HEK293T (cell line): ENCODE measurements at regions of chr4 and their contacts with region 1.

Region 1: GRCh38 chr4:8428293-8429097 is 12.0 kb downstream of the ACOX3 start:
- DNase-seq: peak; percentile 98

Region 2: DNA sequence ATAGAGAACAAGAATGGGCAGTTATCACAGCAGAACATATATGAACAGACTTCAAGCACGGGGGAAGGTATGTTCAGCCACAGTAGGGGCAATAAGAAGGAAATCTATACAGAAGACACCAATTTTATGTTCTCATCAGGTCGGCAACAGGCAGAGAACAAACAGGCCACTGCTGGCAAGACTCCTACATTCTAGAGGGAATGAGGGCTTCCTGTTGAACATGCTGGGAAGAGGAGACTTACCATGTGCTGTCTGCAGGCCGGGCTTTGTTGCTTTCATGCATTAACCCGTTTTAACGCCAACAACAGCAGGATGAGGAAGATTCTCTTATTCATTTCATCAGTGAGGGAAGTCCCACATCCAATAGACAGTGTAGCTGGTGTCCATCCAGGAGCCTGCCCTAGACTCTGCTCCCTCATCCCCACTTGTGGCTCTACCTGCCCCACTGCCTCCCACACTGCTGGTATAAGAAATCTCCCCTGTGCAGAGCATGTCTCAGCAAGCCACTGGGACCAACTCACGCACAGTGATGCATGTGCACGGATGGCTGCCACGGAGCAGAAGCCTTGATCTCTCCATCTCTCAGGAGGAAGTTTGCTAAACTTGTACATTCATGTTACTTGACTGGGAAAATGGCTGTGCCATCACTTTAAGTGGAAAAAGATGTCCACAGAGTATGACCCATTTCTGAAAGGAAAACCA is 72.5 kb before region 1 on chr4:
- CTCF ChIA-PET with region 1: no interaction called
- POLR2A ChIA-PET with region 1: no interaction called
- DNase-seq: no peak

Region 3: DNA sequence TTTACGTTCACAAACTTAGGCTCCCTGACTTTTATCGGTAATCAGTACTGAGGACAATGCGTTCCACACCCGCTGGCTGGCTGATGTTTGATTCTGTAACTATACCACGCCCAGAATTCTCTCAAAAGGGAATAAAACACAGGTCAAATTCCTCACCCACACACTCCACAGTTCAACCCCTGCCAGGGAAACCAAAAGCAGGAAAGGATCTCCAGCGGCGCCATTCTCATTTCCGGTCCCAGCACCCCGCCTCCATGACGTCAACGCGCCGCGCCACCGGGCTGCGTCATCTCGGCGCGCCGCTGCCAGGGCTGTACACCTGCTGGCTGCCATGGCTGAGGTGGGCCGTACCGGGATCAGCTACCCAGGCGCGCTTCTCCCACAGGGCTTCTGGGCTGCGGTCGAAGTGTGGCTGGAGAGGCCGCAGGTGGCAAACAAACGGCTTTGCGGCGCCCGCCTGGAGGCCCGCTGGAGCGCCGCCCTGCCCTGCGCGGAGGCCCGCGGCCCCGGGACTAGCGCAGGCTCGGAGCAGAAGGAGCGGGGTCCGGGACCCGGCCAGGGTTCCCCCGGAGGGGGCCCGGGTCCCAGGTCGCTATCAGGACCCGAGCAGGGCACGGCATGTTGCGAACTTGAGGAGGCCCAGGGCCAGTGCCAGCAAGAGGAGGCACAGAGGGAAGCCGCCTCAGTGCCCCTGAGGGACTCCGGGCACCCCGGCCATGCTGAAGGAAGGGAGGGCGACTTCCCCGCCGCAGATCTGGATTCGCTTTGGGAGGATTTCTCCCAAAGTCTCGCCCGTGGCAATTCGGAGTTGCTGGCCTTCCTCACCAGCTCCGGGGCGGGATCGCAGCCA is 12.2 kb after region 1 on chr4 and contains the starts of genes ACOX3 and TRMT44:
- CTCF ChIA-PET with region 1: interaction called, 10 read pairs
- POLR2A ChIA-PET with region 1: interaction called, 10 read pairs
- DNase-seq: peak; percentile 95

Region 4: DNA sequence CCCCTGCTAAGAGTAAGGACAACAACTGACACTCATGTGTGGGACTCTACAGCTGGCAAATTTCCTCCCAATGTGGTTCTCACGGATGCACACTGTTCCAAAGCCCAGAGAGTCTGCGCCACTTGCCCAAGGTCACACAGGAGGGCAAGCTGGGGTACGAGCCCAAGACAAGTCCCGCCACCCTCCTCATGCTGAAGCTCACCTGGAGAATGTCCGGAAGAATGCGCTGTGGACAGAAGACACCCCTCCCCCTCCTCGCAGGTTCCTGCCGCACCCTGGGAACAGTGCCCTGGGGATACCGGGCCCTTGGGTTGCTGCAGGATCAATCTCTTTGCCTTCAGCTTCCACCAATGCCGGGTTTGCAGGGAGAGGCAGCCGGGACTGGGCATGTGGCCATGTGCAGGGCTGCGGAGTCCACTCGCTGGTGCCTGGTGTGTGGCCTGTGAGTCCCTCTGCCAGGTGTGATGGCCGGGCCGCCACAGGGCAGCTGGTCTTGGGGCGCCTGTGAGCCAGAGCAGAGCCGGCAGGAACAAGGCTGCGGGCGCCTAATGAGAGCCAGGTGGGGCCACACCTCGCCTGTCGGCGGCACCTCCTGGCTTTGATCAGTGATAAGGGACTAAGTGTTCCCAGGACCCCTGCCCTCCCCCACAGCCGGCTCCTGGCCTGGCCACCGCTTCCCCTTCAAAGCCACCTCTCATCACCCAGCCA is 296.5 kb after region 1 on chr4:
- CTCF ChIA-PET with region 1: no interaction called
- POLR2A ChIA-PET with region 1: no interaction called
- DNase-seq: no peak